ENCODE measurements at regions of chr11 and their contacts with region 1.

Region 1: GRCh38 chr11:10925144-10925926 is 67.5 kb upstream of the ZBED5 start:
- DNase-seq: no peak
- ATAC-seq: peak; percentile 55
- H3K4me3 Mint-ChIP-seq: no peak overlapping the region
- H3K27ac Mint-ChIP-seq: no peak overlapping the region
- H3K4me1 Mint-ChIP-seq: peaks cover 14% of the 10 kb centered on the region
- H3K27me3 Mint-ChIP-seq: peaks cover 20% of the 10 kb centered on the region
- CTCF ChIP-seq: no peak

Region 2: DNA sequence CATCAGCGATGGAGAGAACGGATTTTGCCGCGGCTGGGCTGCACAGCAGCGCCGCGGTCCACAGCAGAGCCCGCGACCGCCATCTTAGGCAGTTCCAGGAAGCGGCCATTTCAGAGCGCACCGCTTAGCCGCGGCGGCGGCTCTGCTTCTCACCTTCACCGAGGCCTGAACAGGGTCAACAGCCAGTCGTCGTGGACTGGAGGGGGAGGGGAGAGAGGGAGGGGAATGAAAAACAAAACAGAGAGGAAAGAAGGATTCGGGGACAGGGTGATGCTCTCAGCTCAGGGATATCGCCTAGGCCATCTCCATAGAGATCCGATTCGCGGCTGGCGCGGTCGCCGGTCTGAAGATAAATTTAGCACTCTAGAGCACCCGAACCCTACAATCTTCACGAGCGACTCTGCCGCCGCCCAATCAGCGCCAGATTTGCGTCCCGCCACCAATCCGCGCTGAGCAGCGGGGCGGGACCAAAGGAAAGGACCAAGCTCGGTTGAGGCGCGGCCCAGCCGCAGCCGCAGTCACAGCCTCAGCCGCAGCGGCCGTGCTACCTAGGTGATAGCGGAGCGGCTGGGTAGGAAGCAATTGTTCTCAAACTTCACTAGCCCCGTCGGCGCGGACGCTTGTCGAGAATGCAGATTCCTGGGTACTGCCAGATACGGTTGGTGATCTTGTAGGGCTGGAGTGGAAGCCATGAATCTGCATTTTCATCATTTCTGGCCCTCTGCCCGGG is 67.5 kb before region 1 on chr11 and contains the start of gene ZBED5:
- CTCF ChIA-PET with region 1: interaction called, 8 read pairs
- POLR2A ChIA-PET with region 1: interaction called, 16 read pairs
- DNase-seq: peak; percentile 96
- ATAC-seq: peak; percentile 96
- H3K4me3 Mint-ChIP-seq: peak within 1 kb of the TSS; percentile 100
- H3K27ac Mint-ChIP-seq: peak within 1 kb of the TSS; percentile 100
- H3K4me1 Mint-ChIP-seq: peaks cover 30% of the 10 kb centered on the region
- H3K27me3 Mint-ChIP-seq: no peaks in the 10 kb centered on the region
- CTCF ChIP-seq: no peak
- total RNA-seq, gene ZBED5: 44.9 to 49.5 TPM (median 48.7 TPM) in 3 replicates